H1 (cell line): ENCODE measurements at regions of chr20 and their contacts with region 1.

Region 1: GRCh38 chr20:35269055-35269781 is 8.7 kb downstream of the MMP24OS start:
- DNase-seq: peak in 1 of 2 experiments; percentile 93
- H3K4me3 ChIP-seq: no peak overlapping the region
- H3K27ac ChIP-seq: no peak overlapping the region
- H3K4me1 ChIP-seq: peaks cover 0 to 9% (median 3%) of the 10 kb centered on the region in 4 experiments; a peak in 6 of 7 replicates
- H3K27me3 ChIP-seq: no peaks in the 10 kb centered on the region
- CTCF ChIP-seq: peak; percentile 87 to 99 (median 96)
- EP300 ChIP-seq: no peak
- POLR2A ChIP-seq: no peak
- RAD21 ChIP-seq: peak; percentile 97

Region 2: GRCh38 chr20:34876162-34877001 is 392.8 kb before region 1 on chr20 and contains the start of gene ACSS2:
- CTCF ChIA-PET with region 1: interaction called, 10 read pairs
- POLR2A ChIA-PET with region 1: interaction called, 3 read pairs
- DNase-seq: peak; percentile 99
- H3K4me3 ChIP-seq: peak within 1 kb of the TSS; percentile 68 to 98 (median 76)
- H3K27ac ChIP-seq: no peak within 1 kb of the TSS
- H3K4me1 ChIP-seq: peaks cover 0 to 10% (median 4%) of the 10 kb centered on the region in 4 experiments; a peak in 4 of 7 replicates
- H3K27me3 ChIP-seq: peaks cover 0 to 17% (median 13%) of the 10 kb centered on the region in 4 experiments; a peak in 6 of 7 replicates
- CTCF ChIP-seq: no peak
- EP300 ChIP-seq: no peak
- POLR2A ChIP-seq: no peak
- RAD21 ChIP-seq: no peak
- total RNA-seq, gene ACSS2: 17.7 and 19.9 TPM in 2 replicates

Region 3: GRCh38 chr20:35146920-35147574 is 122.2 kb before region 1 on chr20 and contains the start of gene EDEM2:
- CTCF ChIA-PET with region 1: interaction called, 135 read pairs
- POLR2A ChIA-PET with region 1: interaction called, 27 read pairs
- DNase-seq: peak; percentile 96 to 97
- H3K4me3 ChIP-seq: peak within 1 kb of the TSS; percentile 86 to 94 (median 90)
- H3K27ac ChIP-seq: peak within 1 kb of the TSS; percentile 68; the same call in 1 of the 2 replicates
- H3K4me1 ChIP-seq: 0 out of 7 replicates have a peak, but pooled peaks cover 0 to 3% (median 0%) of the 10 kb centered on the region in 4 experiments
- H3K27me3 ChIP-seq: no peaks in the 10 kb centered on the region
- CTCF ChIP-seq: 0 out of 4 replicates have a peak, but pooled peaks of 1 of the 3 experiments have one; percentile 4
- EP300 ChIP-seq: no peak
- POLR2A ChIP-seq: peak in 1 of 2 experiments; percentile 57; a peak in 2 of 3 replicates
- RAD21 ChIP-seq: peak in 1 of 2 experiments; percentile 29; a peak in 2 of 4 replicates
- total RNA-seq, gene EDEM2: 19.6 and 21.5 TPM in 2 replicates

Region 4: GRCh38 chr20:35226775-35227681 is 42.2 kb before region 1 on chr20:
- CTCF ChIA-PET with region 1: interaction called, 8 read pairs
- POLR2A ChIA-PET with region 1: interaction called, 41 read pairs
- DNase-seq: peak in 1 of 2 experiments; percentile 89
- H3K4me3 ChIP-seq: peak overlapping the region; percentile 44 to 59 (median 52)
- H3K27ac ChIP-seq: no peak overlapping the region
- H3K4me1 ChIP-seq: peaks cover 0 to 14% (median 6%) of the 10 kb centered on the region in 4 experiments; a peak in 5 of 7 replicates
- H3K27me3 ChIP-seq: peaks cover 0 to 13% (median 2%) of the 10 kb centered on the region in 4 experiments; a peak in 2 of 7 replicates
- CTCF ChIP-seq: no peak
- EP300 ChIP-seq: no peak
- POLR2A ChIP-seq: no peak
- RAD21 ChIP-seq: peak in 1 of 2 experiments; percentile 0; a peak in 1 of 4 replicates

Region 5: DNA sequence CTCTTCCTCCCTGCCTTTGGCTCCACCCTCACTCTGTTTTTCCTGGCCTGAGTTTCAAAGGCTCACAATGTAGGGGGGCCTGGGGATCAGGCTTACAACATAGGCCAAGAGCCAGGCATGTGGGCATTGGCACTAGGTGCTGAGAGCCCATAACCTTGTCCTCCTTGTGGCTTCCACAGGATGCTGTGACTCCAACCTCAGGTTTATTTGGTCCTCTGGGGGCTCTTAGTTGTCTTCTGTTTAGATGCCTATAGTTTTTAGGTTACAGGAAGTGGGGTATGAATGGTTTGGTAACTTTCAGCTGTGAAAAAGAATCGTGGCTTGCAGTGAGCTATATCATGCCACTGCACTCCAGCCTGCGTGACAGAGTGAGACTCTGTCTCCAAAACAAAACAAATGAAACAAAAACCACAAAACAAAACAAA is 17.2 kb before region 1 on chr20:
- CTCF ChIA-PET with region 1: interaction called, 5 read pairs
- POLR2A ChIA-PET with region 1: interaction called, 52 read pairs
- DNase-seq: no peak
- H3K4me3 ChIP-seq: no peak overlapping the region
- H3K27ac ChIP-seq: no peak overlapping the region
- H3K4me1 ChIP-seq: 0 out of 7 replicates have a peak, but pooled peaks cover 0 to 2% (median 0%) of the 10 kb centered on the region in 4 experiments
- H3K27me3 ChIP-seq: no peaks in the 10 kb centered on the region
- CTCF ChIP-seq: no peak
- EP300 ChIP-seq: no peak
- POLR2A ChIP-seq: no peak
- RAD21 ChIP-seq: no peak